HAP-1 (cell line): ENCODE measurements at regions of chr6 and their contacts with region 1.

Region 1: GRCh38 chr6:132830334-132830751 is 16.0 kb downstream of the RPS12 start:
- DNase-seq: peak; percentile 58 to 87
- H3K4me3 ChIP-seq: no peak overlapping the region
- H3K4me1 ChIP-seq: peaks cover 11% of the 10 kb centered on the region
- H3K27me3 ChIP-seq: no peaks in the 10 kb centered on the region

Region 2: GRCh38 chr6:132569170-132569569 is 261.2 kb before region 1 on chr6:
- in situ Hi-C with region 1: no loop called
- DNase-seq: no peak
- H3K4me3 ChIP-seq: no peak overlapping the region
- H3K4me1 ChIP-seq: 0 out of 2 replicates have a peak, but pooled peaks cover 4% of the 10 kb centered on the region
- H3K27me3 ChIP-seq: peaks cover 17% of the 10 kb centered on the region

Region 3: GRCh38 chr6:132948889-132949288 is 118.5 kb after region 1 on chr6:
- in situ Hi-C with region 1: loop called (anchors 10 kb)
- DNase-seq: no peak
- H3K4me3 ChIP-seq: no peak overlapping the region
- H3K4me1 ChIP-seq: no peaks in the 10 kb centered on the region
- H3K27me3 ChIP-seq: no peaks in the 10 kb centered on the region